T-cell (primary cell): ENCODE measurements at regions of chr12 and their contacts with region 1.

Region 1: DNA sequence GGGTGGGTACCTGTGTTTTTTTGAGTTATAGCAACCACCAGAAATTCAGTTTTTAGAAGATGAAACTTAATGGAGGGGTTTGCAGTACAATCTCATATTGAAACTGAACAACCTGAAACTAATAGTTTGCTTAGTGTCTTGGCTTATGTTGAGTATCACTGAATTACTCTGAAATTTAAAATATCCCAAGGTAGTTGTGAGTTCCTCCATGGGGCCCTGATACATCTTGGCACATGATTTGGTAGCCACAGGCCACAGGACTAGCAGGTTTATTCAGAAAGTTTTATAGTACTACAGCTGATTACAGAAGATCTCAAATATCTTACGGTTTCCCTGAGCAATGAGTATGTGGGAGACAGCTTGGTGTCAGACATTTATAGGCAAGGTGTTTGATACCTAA is 10.4 kb downstream of the PTGES3 start:
- DNase-seq: no peak
- ATAC-seq: peak in 1 of 4 experiments; percentile 7
- H3K4me3 ChIP-seq: no peak overlapping the region
- H3K4me3 Mint-ChIP-seq: peak overlapping the region in 1 of 3 donors; percentile 53
- H3K27ac ChIP-seq: peak overlapping the region; percentile 24
- H3K27ac Mint-ChIP-seq: peak overlapping the region; percentile 20 to 54
- H3K4me1 ChIP-seq: peaks cover 9 to 66% of the 10 kb centered on the region in 2 experiments
- H3K4me1 Mint-ChIP-seq: peaks cover 58 to 80% (median 79%) of the 10 kb centered on the region in 3 donors
- H3K27me3 ChIP-seq: no peaks in the 10 kb centered on the region
- H3K27me3 Mint-ChIP-seq: no peaks in the 10 kb centered on the region

Region 2: DNA sequence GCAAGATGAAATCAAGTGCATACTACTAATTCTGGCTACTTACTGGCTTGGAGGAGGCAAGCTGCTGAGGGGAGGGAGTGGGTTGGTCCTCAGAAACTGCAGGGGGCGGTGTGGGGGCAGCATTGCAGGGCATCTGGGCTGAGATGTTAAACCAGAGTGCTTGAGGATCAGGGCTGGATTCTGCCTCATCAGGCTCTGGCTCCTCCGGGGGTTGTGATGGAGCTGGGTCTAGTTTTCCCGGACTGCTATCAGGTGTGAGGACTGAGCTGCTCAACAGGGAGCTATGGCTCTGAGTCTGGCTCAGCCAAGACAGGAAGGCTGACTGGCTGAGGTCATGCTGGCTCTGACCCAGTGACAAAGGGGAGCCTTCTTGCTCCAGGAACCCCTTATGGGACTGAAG is 76.2 kb before region 1 on chr12:
- CTCF ChIA-PET with region 1: no interaction called
- POLR2A ChIA-PET with region 1: no interaction called
- DNase-seq: peak in 27 of 35 experiments; percentile 7 to 48 (median 29)
- ATAC-seq: peak in 3 of 4 experiments; percentile 34 to 66 (median 62)
- H3K4me3 ChIP-seq: no peak overlapping the region
- H3K4me3 Mint-ChIP-seq: no peak overlapping the region
- H3K27ac ChIP-seq: no peak overlapping the region
- H3K27ac Mint-ChIP-seq: no peak overlapping the region
- H3K4me1 ChIP-seq: no peaks in the 10 kb centered on the region
- H3K4me1 Mint-ChIP-seq: no peaks in the 10 kb centered on the region
- H3K27me3 ChIP-seq: no peaks in the 10 kb centered on the region
- H3K27me3 Mint-ChIP-seq: no peaks in the 10 kb centered on the region

Region 3: DNA sequence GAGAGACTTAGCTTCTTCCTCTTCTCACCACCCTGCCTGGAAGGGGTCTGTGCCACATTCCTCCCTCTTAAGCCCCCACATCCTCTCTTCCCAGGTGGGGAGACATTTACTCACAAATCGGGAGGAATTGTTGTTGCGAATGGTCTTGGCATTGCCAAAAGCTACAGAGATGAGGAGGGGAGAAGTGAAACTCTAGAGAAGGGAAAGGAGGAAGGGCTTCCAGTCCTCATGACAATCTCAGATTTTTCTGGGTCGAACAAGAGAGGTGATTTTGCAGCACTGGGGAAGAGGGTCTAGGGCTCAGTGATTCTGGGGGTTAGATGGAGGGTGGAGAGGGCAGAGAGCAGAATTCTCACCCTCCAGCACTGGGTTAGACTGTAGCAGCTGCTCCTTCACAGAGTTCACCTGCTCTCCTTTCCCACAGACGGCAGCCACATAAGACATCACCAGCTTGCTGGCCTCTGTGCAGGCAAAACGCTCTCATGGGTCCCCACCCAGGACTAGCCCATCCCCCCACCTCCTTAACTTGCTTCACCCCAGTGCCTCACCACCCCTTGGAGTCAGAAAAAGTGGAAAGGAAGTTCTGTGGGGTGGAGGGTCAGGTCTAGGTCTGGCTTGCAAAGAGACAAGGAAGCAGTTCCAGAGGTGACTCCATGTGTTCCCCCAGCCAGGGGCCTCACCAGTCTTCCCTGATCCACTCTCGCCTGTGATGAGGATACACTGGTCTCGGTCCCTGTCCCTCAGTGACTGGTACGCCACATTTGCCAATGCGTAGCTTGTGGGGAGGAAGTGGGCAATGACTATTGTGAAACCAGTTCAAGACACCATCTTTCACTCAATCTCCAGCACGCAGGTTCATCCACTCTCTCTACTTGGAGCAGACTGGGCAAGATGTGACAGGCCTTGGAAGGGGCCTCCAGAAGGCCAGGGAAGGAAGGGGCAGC is 369.5 kb after region 1 on chr12:
- CTCF ChIA-PET with region 1: no interaction called
- POLR2A ChIA-PET with region 1: interaction called, 4 to 12 read pairs
- DNase-seq: peak in 19 of 35 experiments; percentile 7 to 49 (median 24)
- ATAC-seq: peak; percentile 37 to 83 (median 68)
- H3K4me3 ChIP-seq: peak overlapping the region in 1 of 2 donors; percentile 5
- H3K4me3 Mint-ChIP-seq: peak overlapping the region in 2 of 3 donors; percentile 49 to 74
- H3K27ac ChIP-seq: no peak overlapping the region
- H3K27ac Mint-ChIP-seq: peak overlapping the region; percentile 56 to 61
- H3K4me1 ChIP-seq: peaks cover 12 to 24% of the 10 kb centered on the region in 2 experiments
- H3K4me1 Mint-ChIP-seq: peaks cover 20 to 43% (median 26%) of the 10 kb centered on the region in 3 donors
- H3K27me3 ChIP-seq: peaks cover 0 to 9% of the 10 kb centered on the region in 2 experiments
- H3K27me3 Mint-ChIP-seq: peaks cover 0 to 5% of the 10 kb centered on the region in 2 donors